ENCODE measurements at regions of chr6 and their contacts with region 1.

Region 1: DNA sequence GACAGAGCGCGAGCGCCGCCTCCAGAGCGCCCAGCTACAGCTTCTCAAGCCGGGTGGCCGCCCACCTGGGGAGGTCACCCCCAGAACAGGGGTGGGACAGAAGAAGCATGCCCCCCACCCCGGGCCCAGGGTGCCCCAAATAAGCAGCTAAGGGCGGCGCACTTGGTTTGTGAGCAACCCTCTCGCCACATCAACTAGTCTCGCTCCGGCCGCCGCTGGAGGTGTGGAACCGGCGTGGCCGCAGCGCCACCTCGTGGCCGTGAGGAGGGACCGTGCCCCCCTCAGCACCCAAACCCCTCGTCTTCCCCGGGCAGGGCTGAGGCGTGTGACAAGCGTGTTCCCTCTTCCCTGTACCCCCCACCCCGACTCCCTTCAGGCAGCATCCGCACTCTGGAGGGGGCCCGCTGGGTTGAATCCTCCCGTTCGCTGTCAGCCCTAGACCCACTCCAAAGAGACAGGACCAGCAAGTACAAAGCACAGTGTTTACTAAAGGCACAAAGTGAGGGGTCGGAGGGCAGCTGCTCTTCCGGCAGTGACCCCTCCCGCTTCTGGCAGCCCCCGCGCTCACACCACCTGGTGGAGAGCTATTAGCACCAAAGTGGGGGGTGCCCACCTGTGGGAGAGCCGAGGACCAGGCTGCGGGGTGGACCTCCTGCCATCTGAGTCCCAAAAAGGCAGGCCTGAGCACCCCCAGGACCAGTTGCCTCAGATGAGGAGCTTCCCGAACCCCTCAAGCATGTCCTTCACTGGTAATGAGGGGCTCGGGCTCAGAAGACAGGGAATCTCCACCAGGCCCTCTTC is 45.4 kb downstream of the MDFI start:
- DNase-seq: peak; percentile 84
- H3K4me3 Mint-ChIP-seq: peak overlapping the region; percentile 70
- H3K27ac Mint-ChIP-seq: peak overlapping the region; percentile 75
- H3K4me1 Mint-ChIP-seq: peaks cover 10% of the 10 kb centered on the region
- H3K27me3 Mint-ChIP-seq: no peaks in the 10 kb centered on the region

Region 2: GRCh38 chr6:41306187-41306854 is 377.4 kb before region 1 on chr6:
- CTCF ChIA-PET with region 1: no interaction called
- POLR2A ChIA-PET with region 1: no interaction called
- intact Hi-C with region 1: loop called (anchors 5 kb)
- DNase-seq: peak; percentile 51
- H3K4me3 Mint-ChIP-seq: no peak overlapping the region
- H3K27ac Mint-ChIP-seq: no peak overlapping the region
- H3K4me1 Mint-ChIP-seq: no peaks in the 10 kb centered on the region
- H3K27me3 Mint-ChIP-seq: peaks cover 6% of the 10 kb centered on the region

Region 3: GRCh38 chr6:41424370-41425058 is 259.2 kb before region 1 on chr6:
- CTCF ChIA-PET with region 1: interaction called, 12 read pairs
- POLR2A ChIA-PET with region 1: no interaction called
- intact Hi-C with region 1: loop called (anchors 5 kb)
- DNase-seq: peak; percentile 86
- H3K4me3 Mint-ChIP-seq: no peak overlapping the region
- H3K27ac Mint-ChIP-seq: no peak overlapping the region
- H3K4me1 Mint-ChIP-seq: peaks cover 9% of the 10 kb centered on the region
- H3K27me3 Mint-ChIP-seq: peaks cover 17% of the 10 kb centered on the region

Region 4: DNA sequence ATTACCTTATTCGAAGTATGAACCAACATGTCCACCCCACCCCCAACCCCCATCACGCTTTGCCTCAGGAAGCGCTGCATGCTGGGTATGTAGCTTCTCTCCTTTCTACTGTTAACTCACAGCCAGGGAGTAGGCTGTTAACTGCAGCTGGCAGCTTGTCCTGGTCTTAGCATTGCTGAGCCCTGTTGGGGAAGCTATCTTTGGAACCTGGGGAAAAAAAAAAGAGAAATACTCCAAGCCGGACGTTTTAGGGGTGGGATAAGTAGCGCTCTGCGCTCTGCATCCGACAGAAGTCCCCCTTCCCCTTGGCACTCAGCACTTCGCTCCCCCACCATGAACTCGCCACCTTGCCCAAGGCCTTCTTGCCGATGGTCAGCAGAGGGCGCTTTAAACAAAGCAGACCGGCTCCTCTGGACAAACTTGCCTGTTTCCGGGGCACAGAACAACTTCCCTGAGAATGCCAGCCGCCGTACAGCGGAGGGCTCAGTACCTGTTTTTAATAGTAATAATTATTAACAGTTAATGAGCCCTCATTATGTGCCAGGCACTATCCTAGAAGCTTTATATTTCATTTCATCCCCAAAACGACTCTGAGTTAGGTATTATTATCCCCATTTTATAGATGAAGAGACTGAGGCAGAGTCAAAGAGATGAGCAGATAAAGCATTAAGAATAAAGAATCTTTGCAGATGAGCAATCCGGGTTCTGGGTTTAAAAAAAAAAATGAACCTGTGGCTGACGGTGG is 80.7 kb before region 1 on chr6:
- CTCF ChIA-PET with region 1: interaction called, 90 read pairs
- POLR2A ChIA-PET with region 1: interaction called, 3 read pairs
- intact Hi-C with region 1: loop called (anchors 1 kb)
- DNase-seq: peak; percentile 82
- H3K4me3 Mint-ChIP-seq: peak overlapping the region; percentile 8
- H3K27ac Mint-ChIP-seq: no peak overlapping the region
- H3K4me1 Mint-ChIP-seq: peaks cover 4% of the 10 kb centered on the region
- H3K27me3 Mint-ChIP-seq: peaks cover 1% of the 10 kb centered on the region

Region 5: DNA sequence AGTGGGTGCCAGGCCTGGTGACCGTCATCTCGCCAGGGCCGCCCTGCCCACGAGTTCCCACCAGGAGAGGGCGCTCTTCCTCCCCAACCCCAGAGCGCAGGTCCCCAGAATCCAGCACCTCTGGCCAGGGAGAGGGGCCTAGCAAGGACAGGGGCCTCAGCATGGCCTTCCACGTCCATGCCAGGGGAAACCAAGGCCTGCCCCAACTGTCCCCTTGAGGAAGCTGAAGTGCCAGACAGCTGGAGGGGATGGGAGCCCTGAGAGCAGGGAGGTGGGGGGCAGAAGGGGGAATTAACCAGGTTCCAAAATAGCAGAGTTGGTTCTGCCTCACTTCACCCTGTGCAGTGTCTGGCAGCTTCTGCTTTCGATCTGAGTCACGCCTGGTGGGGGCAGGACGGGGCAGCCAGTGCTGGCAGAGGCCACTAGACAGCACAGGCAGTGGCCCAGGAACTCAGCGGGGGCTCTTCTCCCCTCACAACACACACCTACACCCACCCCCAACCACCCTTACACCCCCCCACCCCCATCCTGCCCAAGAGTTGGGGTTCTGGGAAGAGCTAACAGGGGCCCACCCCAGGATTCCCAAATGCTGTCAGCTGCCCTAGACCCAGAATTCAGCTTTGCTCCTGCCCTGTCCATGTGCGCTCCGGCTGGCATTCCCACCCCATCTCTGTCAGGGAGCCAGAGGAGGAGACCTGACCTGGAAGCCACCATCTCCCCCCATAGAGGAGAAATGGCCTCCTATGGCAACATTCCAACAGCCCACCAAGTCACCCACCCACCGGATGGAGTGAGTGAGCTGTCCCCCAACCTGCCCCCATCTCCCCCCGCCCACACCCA is 22.5 kb after region 1 on chr6:
- CTCF ChIA-PET with region 1: interaction called, 11 read pairs
- POLR2A ChIA-PET with region 1: no interaction called
- intact Hi-C with region 1: no loop called
- DNase-seq: peak; percentile 90
- H3K4me3 Mint-ChIP-seq: peak overlapping the region; percentile 38
- H3K27ac Mint-ChIP-seq: peak overlapping the region; percentile 89
- H3K4me1 Mint-ChIP-seq: peaks cover 36% of the 10 kb centered on the region
- H3K27me3 Mint-ChIP-seq: no peaks in the 10 kb centered on the region

Region 6: GRCh38 chr6:41958022-41958856 is 274.5 kb after region 1 on chr6:
- CTCF ChIA-PET with region 1: no interaction called
- POLR2A ChIA-PET with region 1: no interaction called
- intact Hi-C with region 1: no loop called
- DNase-seq: peak; percentile 66
- H3K4me3 Mint-ChIP-seq: peak overlapping the region; percentile 54
- H3K27ac Mint-ChIP-seq: peak overlapping the region; percentile 97
- H3K4me1 Mint-ChIP-seq: peaks cover 72% of the 10 kb centered on the region
- H3K27me3 Mint-ChIP-seq: no peaks in the 10 kb centered on the region

Measured in activated CD4-positive, alpha-beta memory T cell treated with anti-CD3 and anti-CD28 coated beads for 36 hours (primary cell).